CD4-positive, alpha-beta T cell (primary cell): ENCODE measurements at regions of chr9 and their contacts with region 1.

Region 1: DNA sequence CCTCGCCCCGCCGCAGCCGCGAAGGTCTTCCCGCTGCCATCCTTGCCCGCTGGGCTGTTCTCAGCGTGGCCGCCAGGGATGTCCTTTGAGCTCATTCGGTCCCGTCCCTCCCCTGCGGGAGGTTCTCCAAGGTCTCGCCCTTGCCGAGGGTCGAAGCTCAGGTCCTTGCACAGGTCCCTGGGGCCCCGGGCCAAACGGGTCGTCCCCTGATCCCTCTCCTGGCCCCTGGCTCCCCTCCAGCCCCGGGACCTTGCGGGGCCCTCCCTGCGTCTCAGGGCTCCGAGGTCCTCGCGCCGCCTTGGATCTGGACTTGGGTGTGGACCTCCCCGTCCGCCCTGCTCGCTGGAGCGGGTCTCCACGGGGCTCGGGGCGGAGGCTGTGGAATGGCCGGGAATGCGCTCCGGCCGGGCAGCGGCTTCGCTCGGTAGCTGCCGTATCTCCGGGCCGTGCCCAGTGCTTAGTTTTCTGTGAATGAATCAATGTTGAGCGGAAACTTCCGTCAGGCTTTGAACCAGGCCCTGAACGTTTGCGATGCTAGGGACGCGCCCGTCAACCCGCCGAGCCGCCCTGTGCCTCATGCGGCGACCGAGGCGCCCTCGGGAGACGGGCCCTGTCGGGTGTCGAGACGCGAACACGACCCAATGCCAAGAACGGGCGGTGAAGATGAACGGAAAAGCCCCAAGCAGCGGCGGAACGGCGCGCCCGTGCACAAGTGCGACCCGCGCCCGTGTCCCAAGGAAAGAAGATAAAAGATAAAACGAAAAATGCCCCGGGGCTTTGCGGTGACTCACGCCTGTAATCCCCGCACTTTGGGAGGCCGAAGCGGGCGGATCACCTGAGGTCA is 789 bp downstream of the RNU6ATAC start:
- DNase-seq: peak; percentile 47 to 90 (median 66)
- ATAC-seq: peak; percentile 33
- H3K4me3 ChIP-seq: no peak overlapping the region
- H3K4me3 Mint-ChIP-seq: no peak overlapping the region
- H3K27ac ChIP-seq: no peak overlapping the region
- H3K27ac Mint-ChIP-seq: no peak overlapping the region
- H3K4me1 ChIP-seq: peaks cover 17% of the 10 kb centered on the region
- H3K4me1 Mint-ChIP-seq: peaks cover 17% of the 10 kb centered on the region
- H3K27me3 ChIP-seq: no peaks in the 10 kb centered on the region
- H3K27me3 Mint-ChIP-seq: peaks cover 4% of the 10 kb centered on the region
- CTCF ChIP-seq: peak; percentile 59

Region 2: DNA sequence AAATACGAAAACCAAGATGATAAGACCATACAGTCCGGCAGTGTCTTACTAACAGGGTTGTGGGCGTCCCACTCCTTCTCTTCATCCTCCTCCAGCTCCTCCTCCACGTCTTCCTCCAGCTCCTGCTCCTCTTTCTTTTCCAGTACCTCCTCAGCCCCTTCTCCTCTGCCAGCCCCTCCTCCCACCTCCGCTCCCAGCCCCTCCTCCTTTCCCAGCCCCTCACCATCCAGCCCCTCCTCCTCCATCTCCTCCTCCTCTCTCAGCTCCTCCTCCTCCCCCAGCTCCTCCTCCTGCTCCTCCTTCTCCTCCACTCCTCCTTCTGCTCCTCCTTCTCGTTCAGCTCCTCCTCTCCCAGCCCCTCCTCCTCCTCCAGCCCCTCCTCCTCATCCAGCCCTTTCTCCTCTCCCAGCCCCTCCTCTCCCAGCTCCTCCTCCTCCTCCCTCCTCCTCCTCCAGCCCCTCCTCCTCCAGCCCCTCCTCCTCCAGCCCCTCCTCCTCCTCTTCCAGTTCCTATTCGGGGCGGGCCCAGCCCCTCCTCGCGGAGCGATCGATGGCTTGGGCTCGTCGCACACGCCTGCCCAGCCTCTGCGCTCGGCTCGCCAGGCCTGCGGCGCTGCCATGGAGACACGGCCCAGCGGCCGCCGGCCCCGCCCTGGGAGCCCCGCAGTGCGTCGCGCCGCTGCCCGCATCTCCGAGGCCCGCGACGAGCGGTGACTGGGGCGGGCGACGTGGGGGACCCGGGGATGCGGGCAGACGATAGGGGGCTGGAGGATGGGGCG is 138.6 kb before region 1 on chr9 and contains the start of gene BRD3OS:
- CTCF ChIA-PET with region 1: no interaction called
- POLR2A ChIA-PET with region 1: interaction called, 11 read pairs
- intact Hi-C with region 1: no loop called
- DNase-seq: peak; percentile 83 to 98 (median 92)
- ATAC-seq: peak; percentile 88
- H3K4me3 ChIP-seq: peak within 1 kb of the TSS; percentile 82
- H3K4me3 Mint-ChIP-seq: peak within 1 kb of the TSS; percentile 88
- H3K27ac ChIP-seq: peak within 1 kb of the TSS; percentile 30 to 34
- H3K27ac Mint-ChIP-seq: peak within 1 kb of the TSS; percentile 27
- H3K4me1 ChIP-seq: peaks cover 13% of the 10 kb centered on the region
- H3K4me1 Mint-ChIP-seq: no peaks in the 10 kb centered on the region
- H3K27me3 ChIP-seq: no peaks in the 10 kb centered on the region
- H3K27me3 Mint-ChIP-seq: no peaks in the 10 kb centered on the region
- CTCF ChIP-seq: no peak
- total RNA-seq, gene BRD3OS: 4.0 to 4.9 TPM

Region 3: DNA sequence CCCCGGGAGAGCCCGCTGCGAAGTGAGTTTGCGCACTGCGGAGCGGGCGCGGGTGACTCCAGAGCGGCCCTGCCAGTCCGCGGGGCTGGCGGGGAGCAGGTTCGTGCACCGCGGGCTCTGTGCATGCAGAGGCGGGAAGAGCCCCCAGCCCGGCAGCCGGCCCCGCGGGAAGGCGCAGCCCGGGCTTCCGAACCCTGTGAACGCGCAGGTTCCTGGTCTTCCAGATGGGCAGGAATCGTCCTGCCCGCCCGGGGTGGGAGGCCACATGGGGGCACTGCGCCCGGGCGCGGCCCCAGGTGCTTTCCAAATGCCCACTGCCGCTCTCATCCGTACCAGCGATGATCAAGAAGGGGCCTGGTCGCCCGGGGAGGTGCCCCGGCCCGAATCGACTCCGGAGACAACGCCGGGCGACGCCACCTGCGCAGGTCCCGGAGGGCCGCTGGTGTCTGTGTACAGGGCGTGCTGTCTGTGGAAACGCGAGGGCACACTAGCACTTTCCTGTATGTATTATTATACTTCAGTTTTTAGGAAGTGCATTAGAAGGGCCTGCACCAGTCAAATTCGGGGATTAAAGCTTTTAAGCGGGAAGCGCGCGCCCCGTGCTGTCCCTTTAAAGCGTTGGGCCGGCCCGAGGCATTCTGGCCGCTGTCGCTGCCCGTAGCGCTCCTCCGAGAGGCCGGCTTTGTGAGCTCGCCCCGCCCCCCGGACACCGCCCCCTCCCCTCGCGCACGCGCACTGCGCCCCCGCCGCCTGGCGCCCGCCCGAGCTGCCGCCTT is 28.0 kb before region 1 on chr9 and contains the start of gene WDR5:
- CTCF ChIA-PET with region 1: interaction called, 4 read pairs
- POLR2A ChIA-PET with region 1: interaction called, 114 read pairs
- intact Hi-C with region 1: loop called (anchors 1 kb)
- DNase-seq: peak; percentile 87 to 96 (median 90)
- ATAC-seq: peak; percentile 83
- H3K4me3 ChIP-seq: peak within 1 kb of the TSS; percentile 96
- H3K4me3 Mint-ChIP-seq: peak within 1 kb of the TSS; percentile 92
- H3K27ac ChIP-seq: peak within 1 kb of the TSS; percentile 72 to 80
- H3K27ac Mint-ChIP-seq: peak within 1 kb of the TSS; percentile 87
- H3K4me1 ChIP-seq: peaks cover 47% of the 10 kb centered on the region
- H3K4me1 Mint-ChIP-seq: peaks cover 48% of the 10 kb centered on the region
- H3K27me3 ChIP-seq: no peaks in the 10 kb centered on the region
- H3K27me3 Mint-ChIP-seq: no peaks in the 10 kb centered on the region
- CTCF ChIP-seq: no peak
- total RNA-seq, gene WDR5: 14.9 to 16.9 TPM

Region 4: DNA sequence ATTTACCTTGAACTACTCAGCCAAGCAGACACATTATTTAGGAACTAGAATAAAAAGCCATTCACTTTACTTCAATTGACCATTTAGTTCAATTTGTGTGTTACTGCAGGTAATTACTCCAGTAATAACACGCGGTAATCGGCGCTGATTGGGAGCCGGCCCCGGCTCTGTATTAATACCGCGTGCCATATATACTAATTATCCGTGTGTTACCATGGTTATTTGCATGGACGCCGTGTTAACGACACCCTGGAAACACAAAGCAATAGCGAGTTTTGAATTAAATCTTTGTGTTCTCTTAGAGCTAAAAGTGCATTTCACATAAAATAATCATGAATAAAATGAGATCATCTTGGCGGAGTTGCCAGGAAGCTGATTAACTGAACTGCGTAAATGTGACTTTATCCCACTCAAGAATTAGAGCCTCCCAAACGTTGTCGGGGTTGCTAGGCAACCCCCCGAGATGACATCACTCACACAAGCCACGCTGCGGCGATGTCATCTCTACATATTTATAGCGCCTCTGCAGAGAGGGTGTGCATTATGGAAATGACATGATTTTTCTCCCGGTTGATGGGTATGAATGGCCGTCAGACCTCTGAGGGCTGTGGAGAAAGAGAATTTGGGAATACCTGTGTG is 42.2 kb after region 1 on chr9:
- CTCF ChIA-PET with region 1: no interaction called
- POLR2A ChIA-PET with region 1: no interaction called
- intact Hi-C with region 1: no loop called
- DNase-seq: no peak
- ATAC-seq: no peak
- H3K4me3 ChIP-seq: no peak overlapping the region
- H3K4me3 Mint-ChIP-seq: no peak overlapping the region
- H3K27ac ChIP-seq: no peak overlapping the region
- H3K27ac Mint-ChIP-seq: no peak overlapping the region
- H3K4me1 ChIP-seq: no peaks in the 10 kb centered on the region
- H3K4me1 Mint-ChIP-seq: no peaks in the 10 kb centered on the region
- H3K27me3 ChIP-seq: no peaks in the 10 kb centered on the region
- H3K27me3 Mint-ChIP-seq: no peaks in the 10 kb centered on the region
- CTCF ChIP-seq: no peak

Region 5: GRCh38 chr9:134391314-134392231 is 228.0 kb after region 1 on chr9:
- CTCF ChIA-PET with region 1: no interaction called
- POLR2A ChIA-PET with region 1: interaction called, 13 read pairs
- intact Hi-C with region 1: loop called in 1 of 2 experiments (anchors 5 kb)
- DNase-seq: peak; percentile 30 to 94 (median 58)
- ATAC-seq: peak; percentile 70
- H3K4me3 ChIP-seq: peak overlapping the region; percentile 36
- H3K4me3 Mint-ChIP-seq: peak overlapping the region; percentile 88
- H3K27ac ChIP-seq: peak overlapping the region; percentile 88 to 91
- H3K27ac Mint-ChIP-seq: peak overlapping the region; percentile 99
- H3K4me1 ChIP-seq: peaks cover 71% of the 10 kb centered on the region
- H3K4me1 Mint-ChIP-seq: peaks cover 45% of the 10 kb centered on the region
- H3K27me3 ChIP-seq: no peaks in the 10 kb centered on the region
- H3K27me3 Mint-ChIP-seq: no peaks in the 10 kb centered on the region
- CTCF ChIP-seq: no peak

Region 6: GRCh38 chr9:134641173-134641985 is 477.8 kb after region 1 on chr9 and contains the start of gene COL5A1:
- CTCF ChIA-PET with region 1: no interaction called
- POLR2A ChIA-PET with region 1: no interaction called
- intact Hi-C with region 1: loop called in 1 of 2 experiments (anchors 10 kb)
- DNase-seq: peak in 13 of 14 experiments; percentile 4 to 69 (median 41)
- ATAC-seq: peak; percentile 94
- H3K4me3 ChIP-seq: peak within 1 kb of the TSS; percentile 26
- H3K4me3 Mint-ChIP-seq: peak within 1 kb of the TSS; percentile 62
- H3K27ac ChIP-seq: no peak within 1 kb of the TSS
- H3K27ac Mint-ChIP-seq: no peak within 1 kb of the TSS
- H3K4me1 ChIP-seq: peaks cover 8% of the 10 kb centered on the region
- H3K4me1 Mint-ChIP-seq: no peaks in the 10 kb centered on the region
- H3K27me3 ChIP-seq: peaks cover 9 to 11% of the 10 kb centered on the region in 2 experiments
- H3K27me3 Mint-ChIP-seq: peaks cover 17% of the 10 kb centered on the region
- CTCF ChIP-seq: no peak
- total RNA-seq, gene COL5A1: 0.41 to 0.50 TPM